ENCODE measurements at regions of chr5 and their contacts with region 1.

Region 1: GRCh38 chr5:23529737-23530136 is 22.3 kb downstream of the PRDM9 start:
- DNase-seq: no peak
- H3K4me3 ChIP-seq: no peak overlapping the region
- H3K27ac ChIP-seq: no peak overlapping the region
- H3K4me1 ChIP-seq: no peaks in the 10 kb centered on the region
- H3K27me3 ChIP-seq: no peaks in the 10 kb centered on the region
- CTCF ChIP-seq: no peak
- POLR2A ChIP-seq: no peak

Region 2: GRCh38 chr5:23064710-23065109 is 465.0 kb before region 1 on chr5:
- intact Hi-C with region 1: loop called (anchors 5 kb)
- DNase-seq: no peak
- H3K4me3 ChIP-seq: no peak overlapping the region
- H3K27ac ChIP-seq: no peak overlapping the region
- H3K4me1 ChIP-seq: no peaks in the 10 kb centered on the region
- H3K27me3 ChIP-seq: no peaks in the 10 kb centered on the region
- CTCF ChIP-seq: no peak
- POLR2A ChIP-seq: no peak

Region 3: GRCh38 chr5:24621792-24622191 is 1092.1 kb after region 1 on chr5:
- intact Hi-C with region 1: no loop called
- DNase-seq: no peak
- H3K4me3 ChIP-seq: no peak overlapping the region
- H3K27ac ChIP-seq: no peak overlapping the region
- H3K4me1 ChIP-seq: no peaks in the 10 kb centered on the region
- H3K27me3 ChIP-seq: no peaks in the 10 kb centered on the region
- CTCF ChIP-seq: no peak
- POLR2A ChIP-seq: no peak